ENCODE measurements at regions of chr21 and their contacts with region 1.

Region 1: GRCh38 chr21:36989699-36990507 is 16.6 kb upstream of the RIPPLY3 start:
- DNase-seq: peak; percentile 98
- H3K4me3 ChIP-seq: peak overlapping the region; percentile 46 to 71
- H3K27ac ChIP-seq: peak overlapping the region; percentile 68 to 86
- H3K4me1 ChIP-seq: peaks cover 4 to 14% of the 10 kb centered on the region in 2 experiments; a peak in 2 of 4 replicates
- H3K27me3 ChIP-seq: no peaks in the 10 kb centered on the region
- CTCF ChIP-seq: peak; percentile 73
- EP300 ChIP-seq: no peak
- RAD21 ChIP-seq: 0 out of 2 replicates have a peak, but pooled peaks have one; percentile 27

Region 2: DNA sequence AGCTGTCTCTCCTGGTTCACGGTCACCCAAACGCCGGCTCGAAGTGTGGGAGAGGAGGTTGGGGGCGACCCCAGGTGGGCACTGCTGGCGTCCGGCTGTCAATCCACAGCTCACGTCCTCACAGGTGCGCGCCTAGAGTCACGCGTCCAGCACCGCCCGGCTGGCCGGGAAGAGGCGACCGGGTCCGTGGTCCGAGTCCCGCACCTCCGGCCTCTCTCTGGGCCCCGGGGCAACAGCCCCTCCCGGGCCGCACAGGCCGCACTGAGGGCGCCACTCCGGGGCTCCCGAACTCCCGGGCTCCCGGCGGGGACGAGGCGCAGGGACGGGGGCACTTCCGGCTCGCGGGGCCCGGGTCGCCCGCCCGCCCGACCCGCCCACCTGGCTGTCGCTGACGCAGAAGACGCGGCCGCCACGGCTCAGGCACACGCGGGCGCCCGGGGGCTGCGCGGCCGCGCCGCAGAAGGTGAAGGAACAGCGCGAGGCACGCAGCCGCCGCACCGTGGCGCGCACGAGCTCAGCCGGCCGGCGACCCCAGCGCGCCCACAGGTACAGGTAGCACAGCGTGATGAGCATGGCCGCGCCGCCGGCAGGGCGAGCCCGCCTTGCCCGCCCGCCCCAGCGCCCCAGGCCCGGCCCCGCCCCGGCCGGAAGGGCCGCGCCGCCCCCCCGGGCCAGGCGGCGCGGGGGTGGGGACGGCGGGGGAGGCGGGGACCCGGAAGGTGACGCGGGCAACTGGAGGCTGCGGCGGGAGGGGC is 23.7 kb before region 1 on chr21 and contains the start of gene HLCS:
- CTCF ChIA-PET with region 1: interaction called, 15 read pairs
- POLR2A ChIA-PET with region 1: interaction called, 10 read pairs
- DNase-seq: peak; percentile 89
- H3K4me3 ChIP-seq: peak within 1 kb of the TSS; percentile 64 to 87
- H3K27ac ChIP-seq: peak within 1 kb of the TSS; percentile 57 to 74
- H3K4me1 ChIP-seq: peaks cover 3 to 12% of the 10 kb centered on the region in 2 experiments; a peak in 2 of 4 replicates
- H3K27me3 ChIP-seq: no peaks in the 10 kb centered on the region
- CTCF ChIP-seq: no peak
- EP300 ChIP-seq: no peak
- RAD21 ChIP-seq: no peak
- polyA plus RNA-seq, gene HLCS: 13.0 and 17.7 TPM in 2 replicates

Region 3: GRCh38 chr21:36976882-36977651 is 12.8 kb before region 1 on chr21:
- CTCF ChIA-PET with region 1: interaction called, 38 read pairs
- POLR2A ChIA-PET with region 1: interaction called, 10 read pairs
- DNase-seq: peak; percentile 79
- H3K4me3 ChIP-seq: peak overlapping the region in 1 of 2 experiments; percentile 18; a peak in 1 of 4 replicates
- H3K27ac ChIP-seq: peak overlapping the region; percentile 15 to 44; a peak in 3 of 4 replicates
- H3K4me1 ChIP-seq: peaks cover 0 to 5% of the 10 kb centered on the region in 2 experiments; a peak in 3 of 4 replicates
- H3K27me3 ChIP-seq: no peaks in the 10 kb centered on the region
- CTCF ChIP-seq: peak; percentile 89
- EP300 ChIP-seq: no peak
- RAD21 ChIP-seq: peak; percentile 94

Region 4: GRCh38 chr21:37000381-37000780 is 10.5 kb after region 1 on chr21:
- CTCF ChIA-PET with region 1: interaction called, 17 read pairs
- POLR2A ChIA-PET with region 1: no interaction called
- DNase-seq: no peak
- H3K4me3 ChIP-seq: no peak overlapping the region
- H3K27ac ChIP-seq: no peak overlapping the region
- H3K4me1 ChIP-seq: no peaks in the 10 kb centered on the region
- H3K27me3 ChIP-seq: no peaks in the 10 kb centered on the region
- CTCF ChIP-seq: peak; percentile 24; the same call in 1 of the 2 replicates
- EP300 ChIP-seq: no peak
- RAD21 ChIP-seq: no peak

Region 5: DNA sequence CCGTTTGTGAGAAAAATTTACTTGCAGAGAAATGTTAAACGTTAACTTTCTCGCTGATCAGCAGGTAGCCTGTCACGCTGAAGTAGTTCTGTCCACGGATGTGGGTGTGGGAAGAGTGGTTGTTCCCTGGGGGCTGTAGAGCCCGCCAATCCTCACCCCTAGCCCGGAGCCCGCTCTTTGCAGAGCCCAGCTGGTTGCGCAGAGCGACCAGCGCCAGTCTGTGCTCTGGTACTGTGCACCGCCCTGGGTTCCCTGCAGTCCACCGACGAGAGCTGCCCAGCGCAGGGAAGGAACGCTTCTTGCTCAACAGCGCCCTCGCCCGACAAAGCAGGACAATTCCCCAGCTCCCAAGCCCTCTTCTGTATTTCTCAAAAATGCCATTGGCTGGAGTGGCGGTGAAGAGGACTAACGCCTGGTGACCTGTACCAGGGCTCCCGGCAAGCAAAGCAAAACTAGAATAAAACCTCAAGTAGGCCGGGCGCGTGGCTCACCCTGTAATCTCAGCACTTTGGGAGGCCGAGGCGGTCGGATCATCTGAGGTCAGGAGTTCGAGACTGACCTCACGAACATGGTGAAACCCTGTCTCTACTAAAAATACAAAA is 19.9 kb after region 1 on chr21:
- CTCF ChIA-PET with region 1: interaction called, 26 read pairs
- POLR2A ChIA-PET with region 1: interaction called, 8 read pairs
- DNase-seq: peak; percentile 91
- H3K4me3 ChIP-seq: peak overlapping the region; percentile 36 to 42; a peak in 3 of 4 replicates
- H3K27ac ChIP-seq: no peak overlapping the region; a peak in 1 of 4 replicates
- H3K4me1 ChIP-seq: no peaks in the 10 kb centered on the region; a peak in 1 of 4 replicates
- H3K27me3 ChIP-seq: no peaks in the 10 kb centered on the region; the same call in 1 of the 2 replicates
- CTCF ChIP-seq: peak; percentile 85
- EP300 ChIP-seq: no peak
- RAD21 ChIP-seq: peak; percentile 76

Region 6: DNA sequence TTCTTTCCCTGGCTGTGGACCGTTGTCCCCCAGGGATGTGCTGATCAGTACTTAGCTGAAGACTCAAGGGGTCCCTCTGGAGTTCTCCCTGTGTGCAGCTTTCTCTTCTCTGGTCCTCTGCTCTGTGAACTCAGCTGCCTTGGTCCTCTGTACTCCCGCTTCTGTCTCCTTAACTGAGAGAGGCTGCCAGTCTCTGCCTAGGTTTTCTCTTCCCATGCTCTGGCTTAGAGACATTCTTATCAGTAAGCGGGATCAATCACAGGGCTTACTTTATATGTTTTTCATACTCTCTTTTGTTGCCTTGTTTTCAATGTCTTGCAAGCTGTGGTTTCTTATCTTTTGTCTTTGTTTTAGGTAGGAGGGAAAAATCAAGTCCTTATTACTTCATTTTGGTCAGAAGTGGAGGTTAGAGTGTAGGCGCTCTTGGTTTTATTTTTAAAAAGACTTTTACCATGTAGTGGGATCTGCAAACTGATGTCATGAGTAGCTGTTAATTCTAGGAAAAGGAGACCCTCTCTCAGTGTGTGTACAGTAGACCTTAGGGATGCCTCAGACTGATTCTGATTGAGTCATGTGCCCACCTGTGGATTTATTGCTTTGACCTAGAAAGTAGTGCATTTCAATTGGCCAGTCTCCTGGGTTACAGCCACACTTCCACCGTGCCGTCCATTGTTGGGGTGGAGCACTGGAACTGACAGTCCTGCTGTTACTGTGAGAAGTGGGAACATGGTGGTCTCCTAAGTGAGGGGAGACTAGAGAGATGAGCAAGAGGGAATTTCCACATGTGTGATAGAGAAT is 129.7 kb after region 1 on chr21:
- CTCF ChIA-PET with region 1: interaction called, 11 read pairs
- POLR2A ChIA-PET with region 1: no interaction called
- DNase-seq: no peak
- H3K4me3 ChIP-seq: no peak overlapping the region
- H3K27ac ChIP-seq: no peak overlapping the region
- H3K4me1 ChIP-seq: peaks cover 0 to 2% of the 10 kb centered on the region in 2 experiments; a peak in 2 of 4 replicates
- H3K27me3 ChIP-seq: no peaks in the 10 kb centered on the region
- CTCF ChIP-seq: no peak
- EP300 ChIP-seq: no peak
- RAD21 ChIP-seq: no peak

Region 7: DNA sequence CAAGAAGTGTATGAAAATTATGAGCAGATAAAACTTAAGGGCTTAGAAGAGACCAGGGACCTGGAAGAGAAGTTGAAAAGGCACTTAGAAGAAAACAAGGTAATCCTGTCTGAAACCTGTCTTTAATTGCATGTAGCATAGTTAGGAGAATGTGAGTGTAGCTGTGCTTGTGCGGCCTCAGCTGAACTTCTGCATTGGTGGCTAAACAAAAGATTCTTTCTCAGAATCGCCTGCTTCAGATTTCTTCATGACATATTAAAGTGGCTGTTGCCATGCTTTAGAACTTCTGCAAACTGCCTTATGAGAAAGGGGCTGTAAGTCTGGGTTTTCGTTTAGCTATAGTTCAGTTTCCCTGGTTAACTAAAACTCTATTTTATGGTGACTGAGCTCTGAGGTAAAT is 182.7 kb after region 1 on chr21:
- CTCF ChIA-PET with region 1: no interaction called
- POLR2A ChIA-PET with region 1: no interaction called
- DNase-seq: no peak
- H3K4me3 ChIP-seq: no peak overlapping the region
- H3K27ac ChIP-seq: no peak overlapping the region
- H3K4me1 ChIP-seq: no peaks in the 10 kb centered on the region; a peak in 1 of 4 replicates
- H3K27me3 ChIP-seq: no peaks in the 10 kb centered on the region
- CTCF ChIP-seq: no peak
- EP300 ChIP-seq: no peak
- RAD21 ChIP-seq: no peak